ENCODE measurements at regions of chr6 and their contacts with region 1.

Region 1: DNA sequence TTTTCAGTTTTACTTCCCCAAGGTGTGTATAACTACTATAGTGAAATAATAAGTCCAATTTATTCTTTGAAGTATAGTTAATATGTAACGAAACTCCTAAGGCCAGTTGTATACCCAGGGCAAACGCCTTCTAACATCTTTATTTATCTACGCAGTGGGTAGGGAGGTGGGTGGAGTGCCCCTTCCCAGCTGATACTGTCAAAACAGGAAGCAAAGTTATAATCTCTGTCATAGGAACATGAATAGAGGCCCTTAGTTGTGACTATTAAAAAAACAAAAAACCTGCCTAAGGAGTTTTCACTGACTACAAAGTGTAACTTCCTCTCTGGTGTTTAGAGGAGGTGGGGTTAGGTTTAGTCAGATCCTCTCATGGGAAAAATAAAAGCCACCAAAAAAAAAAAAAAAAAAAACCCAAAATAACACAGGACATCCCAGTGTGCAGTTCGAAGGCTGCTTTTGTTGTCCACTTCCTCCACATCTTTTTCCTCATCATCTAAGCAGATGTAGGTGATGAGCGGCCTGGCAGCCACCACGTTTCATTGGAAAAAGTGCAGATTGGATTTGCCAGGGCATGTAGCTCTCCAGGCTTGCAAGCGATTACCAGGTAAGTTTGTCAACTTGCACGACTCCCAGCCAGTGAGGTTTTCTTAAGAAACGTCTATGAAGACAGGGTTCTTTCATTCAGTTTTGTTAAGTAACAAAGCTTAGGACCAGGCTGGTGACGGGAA is 58.7 kb downstream of the UTRN start:
- DNase-seq: peak in 8 of 9 donors; percentile 37 to 85 (median 76)
- ATAC-seq: peak; percentile 88
- H3K4me3 ChIP-seq: peak overlapping the region; percentile 67
- H3K4me3 Mint-ChIP-seq: peak overlapping the region; percentile 80 to 99 (median 94)
- H3K27ac ChIP-seq: peak overlapping the region; percentile 75
- H3K27ac Mint-ChIP-seq: peak overlapping the region; percentile 87 to 99 (median 96)
- H3K4me1 ChIP-seq: peaks cover 58 to 62% of the 10 kb centered on the region in 2 donors
- H3K4me1 Mint-ChIP-seq: peaks cover 68 to 93% (median 84%) of the 10 kb centered on the region in 7 donors
- H3K27me3 ChIP-seq: no peaks in the 10 kb centered on the region
- H3K27me3 Mint-ChIP-seq: no peaks in the 10 kb centered on the region

Region 2: DNA sequence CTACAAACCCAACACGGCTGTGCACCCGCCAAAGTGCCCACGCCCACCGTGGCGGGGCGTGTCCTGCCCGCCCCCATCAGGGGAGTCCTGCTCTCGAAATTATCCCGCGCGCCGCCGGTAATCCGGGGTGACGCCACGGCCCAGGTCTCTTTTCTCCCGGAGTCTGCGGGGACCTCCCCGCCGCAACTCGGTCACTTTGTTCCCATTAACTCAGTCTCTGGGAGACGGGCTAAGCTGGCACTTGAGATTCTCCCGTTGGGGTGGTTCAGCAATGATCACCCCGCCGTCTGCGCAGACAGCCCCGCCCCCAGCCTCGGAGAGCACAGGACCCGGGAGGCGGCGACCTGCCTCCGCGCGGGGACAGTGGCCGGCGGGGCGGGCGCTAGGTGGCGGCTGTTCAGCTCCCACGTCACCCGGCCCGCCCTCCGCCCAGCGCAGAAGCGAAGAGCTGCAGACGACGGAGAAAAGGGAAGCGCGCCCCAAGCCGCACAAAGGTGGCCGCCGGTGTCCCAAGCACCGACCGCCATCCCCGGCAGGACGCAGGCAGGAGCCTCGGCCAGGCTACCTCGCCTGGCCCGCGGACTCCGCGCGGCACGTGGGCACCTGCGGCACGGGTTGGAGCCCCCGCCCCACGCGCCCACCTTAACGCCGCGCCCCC is 280.0 kb before region 1 on chr6:
- CTCF ChIA-PET with region 1: no interaction called
- POLR2A ChIA-PET with region 1: interaction called, 4 read pairs
- intact Hi-C with region 1: loop called in 1 of 2 experiments (anchors 5 kb)
- DNase-seq: peak; percentile 84 to 91 (median 88)
- ATAC-seq: peak; percentile 96
- H3K4me3 ChIP-seq: peak overlapping the region; percentile 56
- H3K4me3 Mint-ChIP-seq: peak overlapping the region; percentile 87 to 94 (median 91)
- H3K27ac ChIP-seq: peak overlapping the region; percentile 85
- H3K27ac Mint-ChIP-seq: peak overlapping the region; percentile 83 to 97 (median 88)
- H3K4me1 ChIP-seq: peaks cover 0 to 12% of the 10 kb centered on the region in 2 donors
- H3K4me1 Mint-ChIP-seq: peaks cover 17 to 44% (median 29%) of the 10 kb centered on the region in 7 donors
- H3K27me3 ChIP-seq: no peaks in the 10 kb centered on the region
- H3K27me3 Mint-ChIP-seq: peaks cover 0 to 2% (median 0%) of the 10 kb centered on the region in 5 donors

Region 3: DNA sequence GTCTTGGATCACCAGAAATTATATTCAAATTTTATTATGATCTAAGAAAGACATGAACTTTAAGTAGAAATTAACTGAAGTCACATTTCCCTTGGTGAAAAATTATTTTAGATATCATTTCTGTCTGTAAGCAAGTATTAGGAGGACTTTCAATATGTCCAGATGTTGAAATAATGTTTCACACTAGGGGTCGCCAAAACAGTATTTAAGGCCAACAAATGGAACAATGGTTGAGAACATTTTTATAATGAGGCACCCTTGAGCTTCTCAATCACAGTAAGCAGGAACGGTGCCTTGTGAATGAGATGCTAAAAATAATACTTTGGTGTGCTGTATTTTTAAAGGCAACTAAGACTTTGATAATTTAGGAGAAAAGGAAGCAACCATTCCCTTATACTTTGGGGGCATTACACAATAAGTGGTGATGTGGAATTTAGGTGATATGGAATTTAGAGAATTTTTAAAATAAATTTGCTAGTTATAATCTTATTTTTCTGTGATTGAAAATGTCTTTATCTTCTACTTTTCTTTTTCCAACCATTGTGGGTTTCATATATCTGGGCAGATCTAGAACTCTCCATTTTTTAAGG is 238.9 kb before region 1 on chr6:
- CTCF ChIA-PET with region 1: no interaction called
- POLR2A ChIA-PET with region 1: no interaction called
- intact Hi-C with region 1: loop called in 1 of 2 experiments (anchors 1 kb)
- DNase-seq: peak in 7 of 9 donors; percentile 30 to 67 (median 61)
- ATAC-seq: peak; percentile 88
- H3K4me3 ChIP-seq: no peak overlapping the region
- H3K4me3 Mint-ChIP-seq: no peak overlapping the region
- H3K27ac ChIP-seq: no peak overlapping the region
- H3K27ac Mint-ChIP-seq: peak overlapping the region in 1 of 9 donors; percentile 29
- H3K4me1 ChIP-seq: no peaks in the 10 kb centered on the region
- H3K4me1 Mint-ChIP-seq: peaks cover 0 to 7% (median 4%) of the 10 kb centered on the region in 7 donors
- H3K27me3 ChIP-seq: no peaks in the 10 kb centered on the region
- H3K27me3 Mint-ChIP-seq: peaks cover 0 to 6% (median 0%) of the 10 kb centered on the region in 5 donors

Region 4: GRCh38 chr6:144284783-144285547 is 58.9 kb before region 1 on chr6 and contains the start of gene UTRN:
- CTCF ChIA-PET with region 1: interaction called, 4 read pairs
- POLR2A ChIA-PET with region 1: no interaction called
- intact Hi-C with region 1: loop called (anchors 1 kb)
- DNase-seq: peak; percentile 7 to 62 (median 30)
- ATAC-seq: peak; percentile 66
- H3K4me3 ChIP-seq: peak within 1 kb of the TSS; percentile 85
- H3K4me3 Mint-ChIP-seq: peak within 1 kb of the TSS; percentile 76 to 96 (median 92)
- H3K27ac ChIP-seq: no peak within 1 kb of the TSS
- H3K27ac Mint-ChIP-seq: peak within 1 kb of the TSS in 7 of 9 donors; percentile 22 to 82 (median 60)
- H3K4me1 ChIP-seq: peaks cover 10 to 14% of the 10 kb centered on the region in 2 donors
- H3K4me1 Mint-ChIP-seq: peaks cover 12 to 25% (median 15%) of the 10 kb centered on the region in 7 donors
- H3K27me3 ChIP-seq: no peaks in the 10 kb centered on the region
- H3K27me3 Mint-ChIP-seq: peaks cover 6 to 47% (median 18%) of the 10 kb centered on the region in 5 donors
- total RNA-seq, gene UTRN: 148 to 280 (median 153) TPM

Region 5: DNA sequence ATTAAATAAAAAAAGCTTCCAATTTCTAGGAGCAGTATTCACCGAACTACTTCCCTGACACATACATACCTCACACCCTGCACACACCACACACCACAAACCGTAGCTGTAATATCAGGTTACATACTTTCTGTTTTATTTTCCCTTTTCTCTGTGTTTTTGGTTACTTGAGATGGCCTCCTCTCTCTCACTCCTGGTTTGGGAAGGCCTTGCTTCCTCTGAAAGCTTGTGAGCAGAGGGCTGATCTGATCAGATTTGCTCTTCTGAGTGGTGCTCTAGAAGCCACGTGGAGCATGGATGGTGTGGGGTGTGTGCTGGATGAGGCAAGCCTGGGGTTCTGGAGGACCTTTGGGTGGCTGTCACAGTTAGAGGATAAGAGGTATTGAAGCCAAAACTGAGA is 37.9 kb before region 1 on chr6:
- CTCF ChIA-PET with region 1: no interaction called
- POLR2A ChIA-PET with region 1: no interaction called
- intact Hi-C with region 1: loop called in 1 of 2 experiments (anchors 2 kb)
- DNase-seq: peak in 1 of 9 donors; percentile 27
- ATAC-seq: peak; percentile 71
- H3K4me3 ChIP-seq: peak overlapping the region; percentile 23
- H3K4me3 Mint-ChIP-seq: peak overlapping the region in 2 of 10 donors; percentile 67 to 71
- H3K27ac ChIP-seq: no peak overlapping the region
- H3K27ac Mint-ChIP-seq: peak overlapping the region in 2 of 9 donors; percentile 33 to 87
- H3K4me1 ChIP-seq: peaks cover 0 to 44% of the 10 kb centered on the region in 2 donors
- H3K4me1 Mint-ChIP-seq: peaks cover 0 to 48% (median 5%) of the 10 kb centered on the region in 7 donors
- H3K27me3 ChIP-seq: no peaks in the 10 kb centered on the region
- H3K27me3 Mint-ChIP-seq: peaks cover 0 to 12% (median 0%) of the 10 kb centered on the region in 5 donors

Region 6: GRCh38 chr6:144449911-144450597 is 106.2 kb after region 1 on chr6:
- CTCF ChIA-PET with region 1: no interaction called
- POLR2A ChIA-PET with region 1: no interaction called
- intact Hi-C with region 1: no loop called
- DNase-seq: no peak
- ATAC-seq: no peak
- H3K4me3 ChIP-seq: no peak overlapping the region
- H3K4me3 Mint-ChIP-seq: no peak overlapping the region
- H3K27ac ChIP-seq: no peak overlapping the region
- H3K27ac Mint-ChIP-seq: peak overlapping the region in 1 of 9 donors; percentile 63
- H3K4me1 ChIP-seq: no peaks in the 10 kb centered on the region
- H3K4me1 Mint-ChIP-seq: peaks cover 0 to 7% (median 0%) of the 10 kb centered on the region in 7 donors
- H3K27me3 ChIP-seq: no peaks in the 10 kb centered on the region
- H3K27me3 Mint-ChIP-seq: no peaks in the 10 kb centered on the region

Region 7: DNA sequence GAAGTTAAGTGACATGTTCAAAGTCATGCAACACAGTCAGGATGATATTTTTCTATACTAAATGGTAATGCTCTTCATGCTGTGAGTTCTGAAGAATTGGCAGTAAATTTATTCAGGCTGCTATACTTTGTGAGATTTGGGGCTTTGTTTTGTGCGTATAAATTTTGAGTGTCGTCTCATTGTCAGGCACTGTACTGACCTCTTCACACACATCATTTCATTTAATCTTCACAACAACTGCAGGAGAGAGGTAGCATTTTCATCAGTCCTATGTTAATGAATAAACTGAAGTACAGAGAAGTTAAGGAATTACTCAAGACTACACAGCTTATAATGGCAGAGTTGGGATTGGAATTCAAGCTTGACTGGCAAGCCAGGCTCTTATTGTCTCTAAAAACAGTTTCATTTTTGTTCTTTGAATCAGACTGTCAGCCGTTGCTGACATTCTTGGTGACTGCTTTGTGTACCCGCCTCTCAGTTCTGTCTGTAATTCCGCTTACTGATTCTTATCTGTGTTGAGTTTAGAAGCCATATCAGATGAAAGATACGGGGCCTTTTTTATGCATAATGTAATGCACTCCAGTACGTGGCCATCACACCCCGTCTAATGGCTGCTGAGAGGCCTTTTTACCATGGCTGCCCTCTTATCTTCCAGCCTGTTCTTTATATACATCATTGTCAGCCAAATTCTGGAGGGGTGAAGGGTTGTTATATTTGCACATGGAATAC is 216.2 kb after region 1 on chr6:
- CTCF ChIA-PET with region 1: no interaction called
- POLR2A ChIA-PET with region 1: no interaction called
- intact Hi-C with region 1: loop called in 1 of 2 experiments (anchors 5 kb)
- DNase-seq: peak in 8 of 9 donors; percentile 35 to 72 (median 53)
- ATAC-seq: peak; percentile 94
- H3K4me3 ChIP-seq: peak overlapping the region; percentile 17
- H3K4me3 Mint-ChIP-seq: peak overlapping the region; percentile 74 to 87 (median 78)
- H3K27ac ChIP-seq: peak overlapping the region; percentile 65
- H3K27ac Mint-ChIP-seq: peak overlapping the region; percentile 80 to 95 (median 89)
- H3K4me1 ChIP-seq: no peaks in the 10 kb centered on the region
- H3K4me1 Mint-ChIP-seq: peaks cover 11 to 37% (median 27%) of the 10 kb centered on the region in 7 donors
- H3K27me3 ChIP-seq: no peaks in the 10 kb centered on the region
- H3K27me3 Mint-ChIP-seq: no peaks in the 10 kb centered on the region

Region 8: DNA sequence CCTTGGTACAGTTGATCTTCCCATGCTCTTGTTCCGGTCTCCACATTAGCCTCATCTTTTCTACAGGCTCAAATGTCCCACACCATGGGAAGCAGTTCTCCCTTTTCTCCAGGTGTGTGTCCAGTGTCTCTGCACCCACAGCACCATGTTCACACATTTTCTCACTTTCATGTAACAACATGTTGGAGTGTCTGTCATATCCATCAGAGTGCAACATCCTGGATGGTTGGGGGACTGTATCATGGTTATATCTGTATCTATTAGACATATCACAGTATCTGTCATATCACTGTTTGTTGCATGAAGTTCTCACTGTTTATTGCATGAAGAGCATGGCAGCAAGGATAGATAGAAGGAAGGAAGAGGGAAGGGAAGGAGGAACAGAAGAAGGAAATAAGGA is 755.8 kb after region 1 on chr6:
- CTCF ChIA-PET with region 1: no interaction called
- POLR2A ChIA-PET with region 1: no interaction called
- intact Hi-C with region 1: no loop called
- DNase-seq: no peak
- ATAC-seq: no peak
- H3K4me3 ChIP-seq: no peak overlapping the region
- H3K4me3 Mint-ChIP-seq: no peak overlapping the region
- H3K27ac ChIP-seq: no peak overlapping the region
- H3K27ac Mint-ChIP-seq: no peak overlapping the region
- H3K4me1 ChIP-seq: no peaks in the 10 kb centered on the region
- H3K4me1 Mint-ChIP-seq: no peaks in the 10 kb centered on the region
- H3K27me3 ChIP-seq: no peaks in the 10 kb centered on the region
- H3K27me3 Mint-ChIP-seq: peaks cover 0 to 9% (median 5%) of the 10 kb centered on the region in 5 donors

Region 9: GRCh38 chr6:145963216-145964068 is 1619.6 kb after region 1 on chr6:
- CTCF ChIA-PET with region 1: no interaction called
- POLR2A ChIA-PET with region 1: no interaction called
- intact Hi-C with region 1: loop called in 1 of 2 experiments (anchors 5 kb)
- DNase-seq: peak in 6 of 9 donors; percentile 20 to 44 (median 30)
- ATAC-seq: peak; percentile 11
- H3K4me3 ChIP-seq: peak overlapping the region; percentile 88
- H3K4me3 Mint-ChIP-seq: peak overlapping the region; percentile 90 to 99 (median 98)
- H3K27ac ChIP-seq: peak overlapping the region; percentile 84
- H3K27ac Mint-ChIP-seq: peak overlapping the region; percentile 91 to 100 (median 98)
- H3K4me1 ChIP-seq: peaks cover 20 to 26% of the 10 kb centered on the region in 2 donors
- H3K4me1 Mint-ChIP-seq: peaks cover 30 to 72% (median 56%) of the 10 kb centered on the region in 7 donors
- H3K27me3 ChIP-seq: no peaks in the 10 kb centered on the region
- H3K27me3 Mint-ChIP-seq: no peaks in the 10 kb centered on the region

Measured in naive thymus-derived CD4-positive, alpha-beta T cell (primary cell).